PC-3 (cell line): ENCODE measurements at regions of chr2 and their contacts with region 1.

Region 1: DNA sequence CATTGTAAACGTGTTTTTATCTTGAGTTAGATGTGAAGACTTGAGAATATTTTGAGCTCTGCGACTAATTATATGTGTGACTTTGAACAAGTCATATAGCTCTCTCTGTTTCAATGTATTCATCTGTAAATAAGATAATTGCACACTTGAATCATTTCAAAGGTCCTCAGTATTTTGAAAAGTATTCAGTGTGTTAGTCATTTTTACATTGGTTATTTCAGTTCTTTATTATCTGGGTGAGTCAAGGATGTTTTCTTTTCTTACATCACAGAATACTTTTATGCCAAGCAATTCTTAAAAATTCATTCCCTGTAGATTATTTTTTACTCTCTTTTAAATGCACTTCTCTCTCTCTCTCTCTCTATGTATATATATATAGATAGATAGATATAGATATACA is 1098.0 kb upstream of the ZEB2 start:
- DNase-seq: peak; percentile 66
- ATAC-seq: peak; percentile 82
- H3K4me3 ChIP-seq: no peak overlapping the region
- H3K27ac ChIP-seq: peak overlapping the region; percentile 63
- H3K4me1 ChIP-seq: peaks cover 32% of the 10 kb centered on the region
- H3K27me3 ChIP-seq: no peaks in the 10 kb centered on the region
- CTCF ChIP-seq: no peak

Region 2: GRCh38 chr2:145692971-145693478 is 75.1 kb after region 1 on chr2:
- CTCF ChIA-PET with region 1: no interaction called
- POLR2A ChIA-PET with region 1: no interaction called
- intact Hi-C with region 1: loop called (anchors 5 kb)
- DNase-seq: peak; percentile 94
- ATAC-seq: peak; percentile 100
- H3K4me3 ChIP-seq: no peak overlapping the region
- H3K27ac ChIP-seq: peak overlapping the region; percentile 87
- H3K4me1 ChIP-seq: peaks cover 22% of the 10 kb centered on the region
- H3K27me3 ChIP-seq: no peaks in the 10 kb centered on the region
- CTCF ChIP-seq: no peak